ENCODE measurements at regions of chr15 and their contacts with region 1.

Region 1: DNA sequence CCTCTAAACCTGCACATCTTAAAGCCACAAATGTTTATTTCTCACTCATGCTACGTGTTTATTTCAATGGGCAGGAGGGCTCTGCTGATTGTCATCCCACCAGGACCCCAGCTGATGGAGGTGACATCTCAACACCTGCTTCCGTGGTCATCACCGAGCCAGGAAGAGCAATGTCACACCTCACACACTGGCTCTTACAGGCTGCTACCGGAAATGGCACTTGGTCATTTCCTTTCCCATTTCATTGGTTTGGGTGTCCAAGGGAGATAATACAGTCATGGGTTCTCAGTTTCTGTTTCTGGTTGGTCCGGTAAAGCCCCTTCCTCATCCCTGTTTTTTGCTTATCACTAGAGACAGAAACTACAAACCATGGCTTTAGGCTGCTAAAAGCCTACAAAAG is 41.9 kb downstream of the ABHD2 start:
- DNase-seq: no peak
- ATAC-seq: no peak
- H3K4me3 ChIP-seq: no peak overlapping the region
- H3K27ac ChIP-seq: no peak overlapping the region
- H3K4me1 ChIP-seq: peaks cover 17% of the 10 kb centered on the region
- H3K27me3 ChIP-seq: no peaks in the 10 kb centered on the region

Region 2: GRCh38 chr15:88913017-88913849 is 217.0 kb before region 1 on chr15 and contains the start of gene MFGE8:
- intact Hi-C with region 1: no loop called
- DNase-seq: peak; percentile 84 to 93 (median 92)
- ATAC-seq: peak; percentile 90
- H3K4me3 ChIP-seq: peak within 1 kb of the TSS; percentile 52
- H3K27ac ChIP-seq: peak within 1 kb of the TSS; percentile 39
- H3K4me1 ChIP-seq: peaks cover 13% of the 10 kb centered on the region
- H3K27me3 ChIP-seq: no peaks in the 10 kb centered on the region
- total RNA-seq, gene MFGE8: 200 to 347 (median 278) TPM

Region 3: DNA sequence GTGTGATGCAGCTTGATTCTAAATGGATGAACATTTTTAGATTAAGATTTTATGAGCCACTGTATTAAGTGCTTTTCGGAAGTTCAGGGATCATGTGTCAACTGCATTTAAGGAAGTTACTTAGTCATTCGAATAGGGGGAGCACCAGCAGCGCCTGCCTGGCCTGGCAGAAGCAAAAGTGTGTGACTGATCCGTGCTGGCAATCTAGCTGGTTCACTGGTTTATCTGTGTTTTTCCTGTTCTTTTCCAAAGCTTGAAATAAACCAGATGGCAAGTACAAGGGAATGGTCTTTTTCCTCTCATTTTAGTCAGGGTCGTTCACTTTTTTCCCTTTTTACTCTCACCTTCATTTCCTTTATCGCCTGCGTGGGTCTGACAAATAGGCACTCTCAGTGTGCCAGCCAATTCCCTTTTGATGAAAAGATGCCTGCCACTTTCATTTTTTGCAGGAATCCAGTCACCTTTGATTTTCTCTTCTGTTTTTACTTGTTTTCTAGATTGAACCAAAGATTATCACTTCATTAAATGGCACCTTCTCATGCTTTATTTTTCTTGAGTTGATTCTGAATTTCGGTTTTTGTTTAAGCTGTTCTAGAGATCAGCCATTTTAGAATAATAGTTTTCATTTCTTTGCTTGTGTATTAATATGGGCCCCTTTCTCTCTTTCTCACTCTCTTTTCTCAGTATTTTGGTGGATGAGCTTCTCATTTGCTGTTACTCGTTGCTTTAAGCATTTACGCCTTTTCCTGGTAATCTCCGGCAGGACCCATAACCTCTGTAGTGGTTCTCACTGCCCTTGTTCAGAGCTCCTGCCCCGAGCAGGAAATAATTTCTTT is 39.2 kb before region 1 on chr15:
- intact Hi-C with region 1: loop called in 1 of 4 experiments (anchors 5 kb)
- DNase-seq: peak; percentile 84 to 90 (median 88)
- ATAC-seq: peak; percentile 41 to 42
- H3K4me3 ChIP-seq: peak overlapping the region; percentile 43
- H3K27ac ChIP-seq: peak overlapping the region; percentile 95
- H3K4me1 ChIP-seq: peaks cover 11% of the 10 kb centered on the region
- H3K27me3 ChIP-seq: no peaks in the 10 kb centered on the region

Measured in right cardiac atrium (tissue), 5 donors.